Activated naive CD4-positive, alpha-beta T cell treated with anti-CD3 and anti-CD28 coated beads for 36 hours (primary cell): ENCODE measurements at regions of chr16 and their contacts with region 1.

Region 1: GRCh38 chr16:9090960-9091866 is at the start of gene HAPSTR1:
- DNase-seq: peak; percentile 100
- H3K4me3 Mint-ChIP-seq: peak within 1 kb of the TSS; percentile 94
- H3K27ac Mint-ChIP-seq: peak within 1 kb of the TSS; percentile 92
- H3K4me1 Mint-ChIP-seq: peaks cover 27% of the 10 kb centered on the region
- H3K27me3 Mint-ChIP-seq: no peaks in the 10 kb centered on the region
- total RNA-seq, gene HAPSTR1: 41.2 to 42.6 TPM

Region 2: GRCh38 chr16:8859899-8860881 is 231.0 kb before region 1 on chr16:
- CTCF ChIA-PET with region 1: no interaction called
- intact Hi-C with region 1: no loop called
- DNase-seq: no peak
- H3K4me3 Mint-ChIP-seq: no peak overlapping the region
- H3K27ac Mint-ChIP-seq: no peak overlapping the region
- H3K4me1 Mint-ChIP-seq: peaks cover 14% of the 10 kb centered on the region
- H3K27me3 Mint-ChIP-seq: no peaks in the 10 kb centered on the region

Region 3: DNA sequence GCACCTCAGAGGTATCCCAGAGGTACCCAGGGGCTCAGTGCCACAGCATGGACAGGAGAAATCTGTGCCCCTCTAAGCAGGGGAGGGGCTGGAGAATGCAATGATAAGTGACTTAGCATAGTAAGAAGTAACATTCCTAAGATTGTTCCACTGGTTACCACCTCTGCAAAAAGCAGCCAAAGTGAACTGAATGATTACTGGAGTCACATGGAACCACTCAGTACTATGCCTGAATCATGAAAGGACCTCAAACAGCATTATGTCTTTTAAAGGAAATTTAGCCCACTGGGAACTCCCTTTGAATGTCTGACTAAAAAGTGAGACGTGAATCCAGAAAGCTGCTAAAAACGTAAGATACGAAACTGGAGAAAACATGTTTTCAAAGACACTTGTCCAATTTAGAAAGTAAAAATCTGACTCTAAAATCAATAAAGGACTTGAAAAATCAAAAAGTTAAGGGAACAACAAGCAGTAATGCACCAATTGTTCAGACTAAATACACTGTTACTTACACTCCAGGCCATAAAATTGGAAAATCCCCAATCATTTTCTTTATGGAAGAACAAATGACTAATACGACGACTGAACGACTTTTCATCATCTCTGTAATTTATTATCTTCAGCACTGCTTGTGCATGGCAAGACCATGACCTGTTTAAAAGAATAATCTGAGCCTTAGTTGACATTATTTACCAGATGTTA is 170.4 kb before region 1 on chr16:
- CTCF ChIA-PET with region 1: interaction called, 4 read pairs
- intact Hi-C with region 1: loop called (anchors 1 kb)
- DNase-seq: no peak
- H3K4me3 Mint-ChIP-seq: no peak overlapping the region
- H3K27ac Mint-ChIP-seq: peak overlapping the region; percentile 63
- H3K4me1 Mint-ChIP-seq: peaks cover 53% of the 10 kb centered on the region
- H3K27me3 Mint-ChIP-seq: no peaks in the 10 kb centered on the region

Region 4: DNA sequence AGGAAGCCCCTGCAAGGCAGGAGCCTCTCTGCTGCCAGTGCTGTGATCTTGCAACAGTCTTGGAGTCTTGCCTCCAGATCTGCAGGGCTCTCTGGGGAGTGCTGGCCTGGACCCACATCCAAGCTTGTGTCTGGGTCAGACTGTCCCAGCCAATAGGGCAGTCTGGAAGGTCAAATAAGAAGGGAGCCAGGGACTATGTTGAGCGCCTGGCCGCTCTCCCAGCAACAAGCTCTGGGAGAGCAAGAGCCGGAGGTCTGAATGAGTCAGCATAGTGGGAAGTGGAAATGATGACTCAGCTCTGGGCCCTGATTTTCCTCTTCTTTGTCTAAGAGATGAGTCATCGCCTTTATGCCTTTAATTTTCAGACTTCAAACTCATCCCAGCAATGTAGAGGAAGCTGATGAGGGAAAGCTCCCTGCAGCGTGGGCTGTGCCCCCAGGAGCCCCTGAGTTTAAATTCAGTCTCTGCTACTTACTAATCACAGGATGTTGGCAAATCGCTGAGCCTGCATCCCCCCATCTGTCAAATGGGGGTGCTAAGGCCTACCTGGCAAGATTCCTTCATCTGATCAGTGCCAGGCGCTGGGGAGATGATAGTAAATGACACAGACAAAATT is 43.4 kb before region 1 on chr16:
- CTCF ChIA-PET with region 1: interaction called, 3 read pairs
- intact Hi-C with region 1: loop called (anchors 5 kb)
- DNase-seq: peak; percentile 81
- H3K4me3 Mint-ChIP-seq: no peak overlapping the region
- H3K27ac Mint-ChIP-seq: peak overlapping the region; percentile 57
- H3K4me1 Mint-ChIP-seq: peaks cover 32% of the 10 kb centered on the region
- H3K27me3 Mint-ChIP-seq: no peaks in the 10 kb centered on the region

Region 5: DNA sequence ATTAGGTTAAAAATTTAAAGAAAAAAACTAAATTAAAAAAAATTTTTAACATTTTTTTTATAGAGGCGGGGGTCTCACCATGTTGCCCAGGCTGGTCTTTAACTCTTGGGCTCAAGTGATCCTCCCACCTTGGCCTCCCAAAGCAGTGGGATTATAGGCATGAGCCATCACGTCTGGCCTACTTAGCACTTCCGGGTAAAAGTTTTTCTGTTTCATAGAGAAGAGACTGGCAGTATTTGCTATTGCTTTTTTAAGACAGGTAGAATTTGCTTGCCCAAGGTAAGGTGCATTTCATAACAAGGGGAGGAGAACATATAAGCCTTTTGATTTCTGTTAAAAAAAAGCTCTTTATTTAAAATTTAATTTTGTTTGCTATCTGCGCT is 11.8 kb before region 1 on chr16:
- CTCF ChIA-PET with region 1: interaction called, 4 read pairs
- intact Hi-C with region 1: loop called (anchors 1 kb)
- DNase-seq: no peak
- H3K4me3 Mint-ChIP-seq: no peak overlapping the region
- H3K27ac Mint-ChIP-seq: peak overlapping the region; percentile 85
- H3K4me1 Mint-ChIP-seq: peaks cover 31% of the 10 kb centered on the region
- H3K27me3 Mint-ChIP-seq: no peaks in the 10 kb centered on the region

Region 6: DNA sequence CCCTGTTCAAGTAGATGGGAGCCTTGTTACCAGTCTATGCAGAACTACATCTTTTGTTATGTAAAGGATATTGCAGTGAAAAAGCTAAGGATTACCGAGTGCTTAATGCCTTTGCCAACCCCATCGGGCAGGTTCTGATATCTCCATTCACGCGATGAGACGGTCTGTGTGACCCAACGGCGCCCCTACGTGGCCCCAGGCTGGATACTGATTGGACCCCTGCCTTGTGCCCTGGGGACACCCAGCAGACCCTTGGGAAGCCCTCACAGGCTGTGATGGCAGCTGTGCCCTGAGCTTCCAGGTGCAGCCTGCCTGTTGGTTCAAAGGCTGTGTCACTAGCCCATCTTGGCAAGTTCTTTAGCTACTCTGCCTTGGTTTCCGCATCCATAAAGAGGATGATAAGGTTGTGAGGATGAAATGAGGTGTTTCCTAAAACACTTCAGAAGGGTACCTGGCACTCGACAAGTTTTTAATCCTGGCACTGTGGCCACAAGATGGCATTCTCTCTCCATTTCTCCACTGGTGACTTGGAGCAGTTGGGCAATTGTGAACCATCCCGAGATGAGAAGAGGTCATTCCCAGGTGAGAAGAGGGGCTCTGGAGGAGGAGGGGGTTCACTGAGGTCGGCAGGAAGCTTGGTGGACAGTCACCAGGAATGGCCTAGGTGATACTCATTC is 33.8 kb after region 1 on chr16:
- CTCF ChIA-PET with region 1: interaction called, 4 read pairs
- intact Hi-C with region 1: loop called (anchors 2 kb)
- DNase-seq: no peak
- H3K4me3 Mint-ChIP-seq: no peak overlapping the region
- H3K27ac Mint-ChIP-seq: peak overlapping the region; percentile 64
- H3K4me1 Mint-ChIP-seq: peaks cover 61% of the 10 kb centered on the region
- H3K27me3 Mint-ChIP-seq: no peaks in the 10 kb centered on the region